Heart left ventricle (tissue), 16 donors: ENCODE measurements at regions of chr6 and their contacts with region 1.

Region 1: GRCh38 chr6:47126647-47127391 is 84.7 kb upstream of the ADGRF1 start:
- DNase-seq: peak in 2 of 5 donors; percentile 24 to 34
- ATAC-seq: peak; percentile 54 to 75 (median 69)
- H3K4me3 ChIP-seq: no peak overlapping the region
- H3K27ac ChIP-seq: peak overlapping the region in 2 of 12 donors; percentile 9 to 28
- H3K4me1 ChIP-seq: peaks cover 0 to 34% (median 22%) of the 10 kb centered on the region in 12 donors
- H3K27me3 ChIP-seq: no peaks in the 10 kb centered on the region
- CTCF ChIP-seq: no peak
- POLR2A ChIP-seq: no peak

Region 2: DNA sequence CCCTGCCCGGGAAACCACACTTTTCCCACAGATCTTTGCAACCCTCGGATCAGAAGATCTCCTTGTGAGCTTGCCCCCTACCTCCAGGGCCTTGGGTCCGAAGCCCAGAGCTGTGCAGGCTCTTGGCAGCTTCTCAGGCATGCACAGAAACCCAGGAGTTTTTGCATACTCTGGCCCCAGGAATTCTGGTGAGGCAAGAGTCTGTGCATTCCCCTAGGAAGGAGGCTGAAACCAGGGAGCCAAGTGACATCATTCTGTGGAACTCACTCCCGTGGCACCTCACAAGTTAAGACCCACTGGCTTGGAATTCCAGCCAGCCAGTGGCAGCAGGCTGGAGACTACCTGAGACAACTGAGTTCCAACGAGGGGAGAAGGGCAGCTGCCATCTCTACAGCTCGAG is 82.8 kb after region 1 on chr6:
- intact Hi-C with region 1: no loop called
- DNase-seq: no peak
- ATAC-seq: no peak
- H3K4me3 ChIP-seq: no peak overlapping the region
- H3K27ac ChIP-seq: no peak overlapping the region
- H3K4me1 ChIP-seq: no peaks in the 10 kb centered on the region
- H3K27me3 ChIP-seq: no peaks in the 10 kb centered on the region
- CTCF ChIP-seq: no peak
- POLR2A ChIP-seq: no peak

Region 3: GRCh38 chr6:47235964-47236760 is 109.3 kb after region 1 on chr6:
- intact Hi-C with region 1: loop called in 2 of 10 experiments (anchors 10 kb)
- DNase-seq: peak in 3 of 5 donors; percentile 28 to 57 (median 32)
- ATAC-seq: peak; percentile 70 to 90 (median 74)
- H3K4me3 ChIP-seq: no peak overlapping the region
- H3K27ac ChIP-seq: peak overlapping the region in 1 of 12 donors; percentile 23
- H3K4me1 ChIP-seq: peaks cover 0 to 23% (median 8%) of the 10 kb centered on the region in 12 donors
- H3K27me3 ChIP-seq: no peaks in the 10 kb centered on the region
- CTCF ChIP-seq: no peak
- POLR2A ChIP-seq: no peak